ENCODE measurements at regions of chr10 and their contacts with region 1.

Region 1: GRCh38 chr10:22010973-22011408 is 7.5 kb upstream of the DNAJC1 start:
- DNase-seq: peak in 2 of 9 experiments; percentile 33 to 49
- ATAC-seq: no peak
- H3K4me3 ChIP-seq: no peak overlapping the region
- H3K4me3 Mint-ChIP-seq: no peak overlapping the region
- H3K27ac ChIP-seq: no peak overlapping the region
- H3K27ac Mint-ChIP-seq: no peak overlapping the region
- H3K4me1 ChIP-seq: no peaks in the 10 kb centered on the region
- H3K4me1 Mint-ChIP-seq: no peaks in the 10 kb centered on the region
- H3K27me3 ChIP-seq: no peaks in the 10 kb centered on the region
- H3K27me3 Mint-ChIP-seq: peaks cover 1% of the 10 kb centered on the region
- CTCF ChIP-seq: peak; percentile 63

Region 2: GRCh38 chr10:21825345-21825744 is 185.6 kb before region 1 on chr10:
- CTCF ChIA-PET with region 1: no interaction called
- POLR2A ChIA-PET with region 1: no interaction called
- intact Hi-C with region 1: no loop called
- DNase-seq: no peak
- ATAC-seq: no peak
- H3K4me3 ChIP-seq: no peak overlapping the region
- H3K4me3 Mint-ChIP-seq: no peak overlapping the region
- H3K27ac ChIP-seq: no peak overlapping the region
- H3K27ac Mint-ChIP-seq: no peak overlapping the region
- H3K4me1 ChIP-seq: no peaks in the 10 kb centered on the region
- H3K4me1 Mint-ChIP-seq: no peaks in the 10 kb centered on the region
- H3K27me3 ChIP-seq: no peaks in the 10 kb centered on the region
- H3K27me3 Mint-ChIP-seq: no peaks in the 10 kb centered on the region
- CTCF ChIP-seq: no peak

Region 3: GRCh38 chr10:21975378-21975990 is 35.5 kb before region 1 on chr10:
- CTCF ChIA-PET with region 1: no interaction called
- POLR2A ChIA-PET with region 1: no interaction called
- intact Hi-C with region 1: no loop called
- DNase-seq: no peak
- ATAC-seq: no peak
- H3K4me3 ChIP-seq: no peak overlapping the region
- H3K4me3 Mint-ChIP-seq: no peak overlapping the region
- H3K27ac ChIP-seq: no peak overlapping the region
- H3K27ac Mint-ChIP-seq: no peak overlapping the region
- H3K4me1 ChIP-seq: no peaks in the 10 kb centered on the region
- H3K4me1 Mint-ChIP-seq: peaks cover 15% of the 10 kb centered on the region
- H3K27me3 ChIP-seq: no peaks in the 10 kb centered on the region
- H3K27me3 Mint-ChIP-seq: no peaks in the 10 kb centered on the region
- CTCF ChIP-seq: no peak

Region 4: GRCh38 chr10:22133749-22134624 is 123.0 kb after region 1 on chr10:
- CTCF ChIA-PET with region 1: no interaction called
- POLR2A ChIA-PET with region 1: no interaction called
- intact Hi-C with region 1: no loop called
- DNase-seq: peak in 1 of 9 experiments; percentile 3
- ATAC-seq: no peak
- H3K4me3 ChIP-seq: no peak overlapping the region
- H3K4me3 Mint-ChIP-seq: no peak overlapping the region
- H3K27ac ChIP-seq: no peak overlapping the region
- H3K27ac Mint-ChIP-seq: peak overlapping the region; percentile 17
- H3K4me1 ChIP-seq: peaks cover 6% of the 10 kb centered on the region
- H3K4me1 Mint-ChIP-seq: peaks cover 8% of the 10 kb centered on the region
- H3K27me3 ChIP-seq: peaks cover 0 to 6% of the 10 kb centered on the region in 2 experiments
- H3K27me3 Mint-ChIP-seq: peaks cover 31% of the 10 kb centered on the region
- CTCF ChIP-seq: no peak

Region 5: GRCh38 chr10:22420787-22421517 is 410.0 kb after region 1 on chr10:
- CTCF ChIA-PET with region 1: interaction called, 3 read pairs
- POLR2A ChIA-PET with region 1: no interaction called
- intact Hi-C with region 1: loop called (anchors 5 kb)
- DNase-seq: peak in 3 of 9 experiments; percentile 8 to 56 (median 33)
- ATAC-seq: peak; percentile 49
- H3K4me3 ChIP-seq: no peak overlapping the region
- H3K4me3 Mint-ChIP-seq: no peak overlapping the region
- H3K27ac ChIP-seq: no peak overlapping the region
- H3K27ac Mint-ChIP-seq: no peak overlapping the region
- H3K4me1 ChIP-seq: no peaks in the 10 kb centered on the region
- H3K4me1 Mint-ChIP-seq: no peaks in the 10 kb centered on the region
- H3K27me3 ChIP-seq: no peaks in the 10 kb centered on the region
- H3K27me3 Mint-ChIP-seq: peaks cover 5% of the 10 kb centered on the region
- CTCF ChIP-seq: peak; percentile 37

Region 6: GRCh38 chr10:22444219-22444788 is 433.3 kb after region 1 on chr10:
- CTCF ChIA-PET with region 1: no interaction called
- POLR2A ChIA-PET with region 1: no interaction called
- intact Hi-C with region 1: no loop called
- DNase-seq: no peak
- ATAC-seq: no peak
- H3K4me3 ChIP-seq: no peak overlapping the region
- H3K4me3 Mint-ChIP-seq: no peak overlapping the region
- H3K27ac ChIP-seq: no peak overlapping the region
- H3K27ac Mint-ChIP-seq: no peak overlapping the region
- H3K4me1 ChIP-seq: peaks cover under 1% of the 10 kb centered on the region
- H3K4me1 Mint-ChIP-seq: peaks cover 8% of the 10 kb centered on the region
- H3K27me3 ChIP-seq: no peaks in the 10 kb centered on the region
- H3K27me3 Mint-ChIP-seq: peaks cover 10% of the 10 kb centered on the region
- CTCF ChIP-seq: no peak

Measured in CD8-positive, alpha-beta T cell (primary cell).